ENCODE measurements at regions of chr15 and their contacts with region 1.

Region 1: DNA sequence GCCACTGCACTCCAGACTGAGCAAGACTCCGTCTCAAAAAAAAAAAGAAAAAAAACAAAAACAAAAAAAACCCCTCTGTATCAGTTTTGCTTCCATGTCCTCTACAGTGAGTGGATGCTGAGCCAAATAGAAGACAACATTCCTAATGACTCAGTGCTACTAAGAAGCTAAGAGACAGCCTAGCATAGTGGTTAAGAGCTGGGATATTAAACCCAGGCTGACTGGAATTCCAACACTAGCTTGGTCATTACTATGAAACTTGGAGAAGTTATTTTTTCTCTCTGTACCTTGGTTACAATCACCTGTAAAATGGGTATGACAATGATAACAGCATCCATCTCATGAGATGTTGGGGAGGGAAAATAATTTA is 60.9 kb upstream of the PYGO1 start:
- DNase-seq: no peak
- ATAC-seq: no peak
- H3K4me3 ChIP-seq: no peak overlapping the region
- H3K4me3 Mint-ChIP-seq: no peak overlapping the region
- H3K27ac ChIP-seq: no peak overlapping the region
- H3K27ac Mint-ChIP-seq: no peak overlapping the region
- H3K4me1 ChIP-seq: no peaks in the 10 kb centered on the region
- H3K4me1 Mint-ChIP-seq: no peaks in the 10 kb centered on the region
- H3K27me3 ChIP-seq: no peaks in the 10 kb centered on the region
- H3K27me3 Mint-ChIP-seq: peaks cover 0 to 6% (median 0%) of the 10 kb centered on the region in 5 donors

Region 2: GRCh38 chr15:55846116-55846707 is 197.2 kb after region 1 on chr15:
- CTCF ChIA-PET with region 1: interaction called, 6 read pairs
- POLR2A ChIA-PET with region 1: no interaction called
- intact Hi-C with region 1: loop called in 1 of 2 experiments (anchors 1 kb)
- DNase-seq: peak in 8 of 9 donors; percentile 19 to 65 (median 52)
- ATAC-seq: peak; percentile 75
- H3K4me3 ChIP-seq: no peak overlapping the region
- H3K4me3 Mint-ChIP-seq: no peak overlapping the region
- H3K27ac ChIP-seq: no peak overlapping the region
- H3K27ac Mint-ChIP-seq: no peak overlapping the region
- H3K4me1 ChIP-seq: no peaks in the 10 kb centered on the region
- H3K4me1 Mint-ChIP-seq: peaks cover 0 to 3% (median 0%) of the 10 kb centered on the region in 7 donors
- H3K27me3 ChIP-seq: no peaks in the 10 kb centered on the region
- H3K27me3 Mint-ChIP-seq: no peaks in the 10 kb centered on the region

Region 3: GRCh38 chr15:55897560-55898336 is 248.7 kb after region 1 on chr15:
- CTCF ChIA-PET with region 1: no interaction called
- POLR2A ChIA-PET with region 1: no interaction called
- intact Hi-C with region 1: loop called in 1 of 2 experiments (anchors 5 kb)
- DNase-seq: no peak
- ATAC-seq: no peak
- H3K4me3 ChIP-seq: no peak overlapping the region
- H3K4me3 Mint-ChIP-seq: no peak overlapping the region
- H3K27ac ChIP-seq: no peak overlapping the region
- H3K27ac Mint-ChIP-seq: no peak overlapping the region
- H3K4me1 ChIP-seq: no peaks in the 10 kb centered on the region
- H3K4me1 Mint-ChIP-seq: peaks cover 4 to 14% (median 9%) of the 10 kb centered on the region in 7 donors
- H3K27me3 ChIP-seq: no peaks in the 10 kb centered on the region
- H3K27me3 Mint-ChIP-seq: no peaks in the 10 kb centered on the region

Region 4: GRCh38 chr15:55917881-55918296 is 268.9 kb after region 1 on chr15:
- CTCF ChIA-PET with region 1: no interaction called
- POLR2A ChIA-PET with region 1: no interaction called
- intact Hi-C with region 1: loop called in 1 of 2 experiments (anchors 1 kb)
- DNase-seq: peak in 4 of 9 donors; percentile 3 to 26 (median 14)
- ATAC-seq: no peak
- H3K4me3 ChIP-seq: no peak overlapping the region
- H3K4me3 Mint-ChIP-seq: no peak overlapping the region
- H3K27ac ChIP-seq: no peak overlapping the region
- H3K27ac Mint-ChIP-seq: no peak overlapping the region
- H3K4me1 ChIP-seq: no peaks in the 10 kb centered on the region
- H3K4me1 Mint-ChIP-seq: no peaks in the 10 kb centered on the region
- H3K27me3 ChIP-seq: no peaks in the 10 kb centered on the region
- H3K27me3 Mint-ChIP-seq: no peaks in the 10 kb centered on the region

Region 5: GRCh38 chr15:56428821-56429458 is 779.9 kb after region 1 on chr15:
- CTCF ChIA-PET with region 1: interaction called, 7 read pairs
- POLR2A ChIA-PET with region 1: no interaction called
- intact Hi-C with region 1: loop called in 1 of 2 experiments (anchors 5 kb)
- DNase-seq: peak in 3 of 9 donors; percentile 4 to 15 (median 5)
- ATAC-seq: no peak
- H3K4me3 ChIP-seq: no peak overlapping the region
- H3K4me3 Mint-ChIP-seq: no peak overlapping the region
- H3K27ac ChIP-seq: no peak overlapping the region
- H3K27ac Mint-ChIP-seq: no peak overlapping the region
- H3K4me1 ChIP-seq: no peaks in the 10 kb centered on the region
- H3K4me1 Mint-ChIP-seq: no peaks in the 10 kb centered on the region
- H3K27me3 ChIP-seq: peaks cover 0 to 5% of the 10 kb centered on the region in 2 donors
- H3K27me3 Mint-ChIP-seq: peaks cover 0 to 20% (median 9%) of the 10 kb centered on the region in 5 donors